ENCODE measurements at regions of chr14 and their contacts with region 1.

Region 1: DNA sequence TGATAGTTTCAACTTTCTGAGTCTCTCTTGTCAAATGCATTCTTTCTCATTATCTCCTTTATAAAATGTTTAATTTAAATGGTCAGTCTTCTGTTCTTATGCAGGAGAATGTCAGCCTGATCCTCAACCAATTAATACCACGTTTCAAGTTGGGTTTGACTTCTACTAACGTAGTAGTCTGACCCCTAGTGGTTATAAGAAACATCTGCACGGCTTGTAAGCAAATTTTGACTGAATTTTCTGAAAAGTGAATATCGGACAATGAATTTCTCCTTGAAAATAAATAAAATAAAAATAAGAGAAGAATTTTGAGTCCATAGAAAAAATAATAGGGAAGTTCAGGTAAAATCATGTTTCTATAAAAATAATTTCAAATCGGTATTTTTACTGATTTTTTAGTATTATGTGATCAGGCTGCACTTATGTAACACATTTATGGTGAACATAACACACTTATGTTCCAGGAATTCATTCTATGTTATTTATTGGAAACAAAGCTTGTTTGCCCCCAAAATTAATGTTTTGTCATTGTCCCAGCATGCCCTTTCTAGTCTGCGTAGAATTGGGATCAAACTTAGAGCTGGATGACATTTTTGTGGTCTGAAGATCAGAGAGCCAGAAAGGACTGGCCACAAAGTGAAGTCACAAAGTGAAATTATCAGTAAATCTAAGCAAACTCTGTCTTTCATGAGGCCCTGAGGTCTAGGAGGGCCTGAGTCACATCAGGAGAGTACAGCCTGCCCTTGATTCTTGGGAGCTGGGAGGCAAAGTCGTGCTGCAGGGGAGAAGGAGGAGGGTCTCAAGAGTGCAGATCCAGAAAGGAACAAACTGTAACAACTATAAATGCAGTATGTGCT is 101.2 kb upstream of the STXBP6 start:
- DNase-seq: no peak

Region 2: GRCh38 chr14:24734878-24735500 is 416.2 kb before region 1 on chr14:
- intact Hi-C with region 1: loop called (anchors 1 kb)
- DNase-seq: peak in 4 of 10 donors; percentile 22 to 70 (median 44)

Measured in posterior cingulate gyrus (tissue), 11 donors.